Endothelial cell of umbilical vein (primary cell): ENCODE measurements at regions of chr5 and their contacts with region 1.

Region 1: GRCh38 chr5:40679155-40679913 is 381 bp upstream of the PTGER4 start:
- DNase-seq: peak; percentile 93
- H3K4me3 ChIP-seq: peak overlapping the region; percentile 71 to 98 (median 97)
- H3K27ac ChIP-seq: peak overlapping the region; percentile 76
- H3K4me1 ChIP-seq: peaks cover 30% of the 10 kb centered on the region
- H3K27me3 ChIP-seq: no peaks in the 10 kb centered on the region
- CTCF ChIP-seq: no peak
- POLR2A ChIP-seq: peak; percentile 96

Region 2: DNA sequence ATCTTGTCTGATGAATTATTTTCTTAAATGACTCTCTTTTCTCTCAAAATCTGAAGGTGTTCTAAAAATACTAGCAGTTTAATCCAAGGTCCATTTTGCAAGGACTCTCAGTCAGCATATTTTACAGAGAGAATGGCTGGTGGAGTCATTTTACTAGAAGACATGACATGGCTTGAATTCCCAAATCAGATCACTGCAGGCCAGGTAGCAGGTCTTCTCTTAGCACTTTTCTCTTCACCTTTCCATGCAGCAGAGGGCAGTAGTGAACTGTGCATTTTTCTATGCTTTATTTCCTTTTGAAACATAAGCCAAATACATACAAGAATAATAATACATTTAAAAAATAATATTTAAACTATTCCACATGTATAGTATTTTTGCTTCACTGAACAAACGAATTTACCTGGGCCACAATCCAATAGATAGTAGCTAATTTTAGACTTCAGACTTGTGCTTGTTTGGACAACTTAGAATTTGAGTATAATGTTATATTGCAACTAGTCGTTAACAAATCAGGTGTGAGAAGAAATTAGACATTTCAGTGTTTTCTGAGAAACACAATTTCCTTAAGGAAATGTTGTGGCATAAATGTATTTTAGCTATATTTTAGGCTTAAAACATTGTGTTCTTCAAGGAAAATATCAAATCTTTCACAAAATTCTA is 965.2 kb before region 1 on chr5:
- CTCF ChIA-PET with region 1: interaction called, 62 read pairs
- POLR2A ChIA-PET with region 1: no interaction called
- dilution Hi-C with region 1: no loop called
- intact Hi-C with region 1: no loop called
- DNase-seq: peak; percentile 84
- H3K4me3 ChIP-seq: no peak overlapping the region
- H3K27ac ChIP-seq: no peak overlapping the region
- H3K4me1 ChIP-seq: no peaks in the 10 kb centered on the region
- H3K27me3 ChIP-seq: no peaks in the 10 kb centered on the region
- CTCF ChIP-seq: peak; percentile 42 to 65
- POLR2A ChIP-seq: no peak

Region 3: DNA sequence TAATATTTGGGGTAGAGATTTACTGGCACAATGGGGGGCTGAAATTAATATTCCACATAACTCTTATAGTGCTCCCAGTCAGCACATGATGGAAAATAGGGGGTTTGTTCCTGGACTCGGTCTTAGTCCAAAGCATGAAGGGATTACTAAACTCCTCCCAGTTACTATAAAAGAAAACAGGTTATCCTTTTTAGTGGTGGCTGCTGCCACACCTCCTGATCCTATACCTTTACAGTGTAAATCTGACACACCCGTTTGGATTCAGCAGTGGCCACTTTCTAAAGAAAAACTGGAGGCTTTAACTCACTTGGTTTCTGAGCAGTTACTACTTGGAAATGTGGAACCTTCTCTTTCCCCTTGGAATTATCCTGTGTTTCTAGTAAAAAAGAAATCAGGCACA is 572.5 kb before region 1 on chr5:
- CTCF ChIA-PET with region 1: no interaction called
- POLR2A ChIA-PET with region 1: no interaction called
- dilution Hi-C with region 1: no loop called
- intact Hi-C with region 1: loop called (anchors 5 kb)
- DNase-seq: no peak
- H3K4me3 ChIP-seq: no peak overlapping the region
- H3K27ac ChIP-seq: no peak overlapping the region
- H3K4me1 ChIP-seq: peaks cover 12% of the 10 kb centered on the region
- H3K27me3 ChIP-seq: no peaks in the 10 kb centered on the region
- CTCF ChIP-seq: no peak
- POLR2A ChIP-seq: no peak

Region 4: GRCh38 chr5:40223884-40224402 is 455.4 kb before region 1 on chr5:
- CTCF ChIA-PET with region 1: no interaction called
- POLR2A ChIA-PET with region 1: interaction called, 6 read pairs
- dilution Hi-C with region 1: no loop called
- intact Hi-C with region 1: loop called (anchors 5 kb)
- DNase-seq: peak; percentile 65
- H3K4me3 ChIP-seq: no peak overlapping the region
- H3K27ac ChIP-seq: peak overlapping the region; percentile 38
- H3K4me1 ChIP-seq: peaks cover 11% of the 10 kb centered on the region
- H3K27me3 ChIP-seq: no peaks in the 10 kb centered on the region
- CTCF ChIP-seq: no peak
- POLR2A ChIP-seq: no peak

Region 5: GRCh38 chr5:40464511-40464910 is 214.8 kb before region 1 on chr5:
- CTCF ChIA-PET with region 1: interaction called, 7 read pairs
- POLR2A ChIA-PET with region 1: interaction called, 6 read pairs
- dilution Hi-C with region 1: no loop called
- intact Hi-C with region 1: loop called (anchors 5 kb)
- DNase-seq: peak; percentile 59
- H3K4me3 ChIP-seq: no peak overlapping the region
- H3K27ac ChIP-seq: no peak overlapping the region
- H3K4me1 ChIP-seq: peaks cover 21% of the 10 kb centered on the region
- H3K27me3 ChIP-seq: no peaks in the 10 kb centered on the region
- CTCF ChIP-seq: no peak
- POLR2A ChIP-seq: no peak

Region 6: GRCh38 chr5:40551496-40552491 is 127.5 kb before region 1 on chr5:
- CTCF ChIA-PET with region 1: interaction called, 5 read pairs
- POLR2A ChIA-PET with region 1: interaction called, 5 read pairs
- dilution Hi-C with region 1: no loop called
- intact Hi-C with region 1: loop called (anchors 1 kb)
- DNase-seq: peak; percentile 81
- H3K4me3 ChIP-seq: peak overlapping the region in 2 of 3 experiments; percentile 8 to 17
- H3K27ac ChIP-seq: peak overlapping the region; percentile 92
- H3K4me1 ChIP-seq: peaks cover 25% of the 10 kb centered on the region
- H3K27me3 ChIP-seq: no peaks in the 10 kb centered on the region
- CTCF ChIP-seq: no peak
- POLR2A ChIP-seq: peak; percentile 30

Region 7: GRCh38 chr5:40762705-40763104 is 83.4 kb after region 1 on chr5:
- CTCF ChIA-PET with region 1: no interaction called
- POLR2A ChIA-PET with region 1: no interaction called
- dilution Hi-C with region 1: no loop called
- intact Hi-C with region 1: no loop called
- DNase-seq: no peak
- H3K4me3 ChIP-seq: no peak overlapping the region
- H3K27ac ChIP-seq: no peak overlapping the region
- H3K4me1 ChIP-seq: no peaks in the 10 kb centered on the region
- H3K27me3 ChIP-seq: no peaks in the 10 kb centered on the region
- CTCF ChIP-seq: no peak
- POLR2A ChIP-seq: no peak